Activated CD4-positive, alpha-beta memory T cell treated with anti-CD3 and anti-CD28 coated beads, Interleukin-2, amount 10 ng/mL, durations not matched to agents 7 days and 5 days (primary cell): ENCODE measurements at regions of chr18 and their contacts with region 1.

Region 1: GRCh38 chr18:76982841-76983587 is 149.6 kb downstream of the MBP start:
- DNase-seq: peak; percentile 90
- H3K4me3 Mint-ChIP-seq: no peak overlapping the region
- H3K27ac Mint-ChIP-seq: no peak overlapping the region
- H3K4me1 Mint-ChIP-seq: peaks cover 6% of the 10 kb centered on the region
- H3K27me3 Mint-ChIP-seq: no peaks in the 10 kb centered on the region

Region 2: GRCh38 chr18:76922107-76922506 is 60.9 kb before region 1 on chr18:
- CTCF ChIA-PET with region 1: interaction called, 33 read pairs
- POLR2A ChIA-PET with region 1: interaction called, 3 read pairs
- DNase-seq: peak; percentile 62
- H3K4me3 Mint-ChIP-seq: no peak overlapping the region
- H3K27ac Mint-ChIP-seq: no peak overlapping the region
- H3K4me1 Mint-ChIP-seq: peaks cover 15% of the 10 kb centered on the region
- H3K27me3 Mint-ChIP-seq: no peaks in the 10 kb centered on the region

Region 3: DNA sequence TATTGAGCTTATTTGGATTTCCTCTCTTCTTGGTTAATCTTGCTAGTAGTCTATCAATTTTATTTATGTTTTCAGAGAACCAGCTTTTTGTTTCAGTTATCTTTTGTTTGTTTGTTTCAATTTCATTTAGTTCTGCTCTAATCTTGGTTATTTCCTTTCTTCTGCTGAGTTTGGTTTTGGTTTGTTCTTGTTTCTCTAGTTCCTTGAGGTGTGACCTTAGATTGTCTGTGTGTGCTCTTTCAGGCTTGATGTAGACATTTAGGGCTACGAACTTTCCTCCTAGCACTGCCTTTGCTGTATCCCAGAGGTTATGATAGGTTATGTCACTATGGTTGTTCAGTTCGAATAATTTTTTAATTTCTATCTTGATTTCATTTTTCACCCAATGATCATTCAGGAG is 19.1 kb before region 1 on chr18:
- CTCF ChIA-PET with region 1: interaction called, 19 read pairs
- POLR2A ChIA-PET with region 1: no interaction called
- DNase-seq: no peak
- H3K4me3 Mint-ChIP-seq: peak overlapping the region; percentile 4
- H3K27ac Mint-ChIP-seq: peak overlapping the region; percentile 70
- H3K4me1 Mint-ChIP-seq: peaks cover 30% of the 10 kb centered on the region
- H3K27me3 Mint-ChIP-seq: no peaks in the 10 kb centered on the region

Region 4: DNA sequence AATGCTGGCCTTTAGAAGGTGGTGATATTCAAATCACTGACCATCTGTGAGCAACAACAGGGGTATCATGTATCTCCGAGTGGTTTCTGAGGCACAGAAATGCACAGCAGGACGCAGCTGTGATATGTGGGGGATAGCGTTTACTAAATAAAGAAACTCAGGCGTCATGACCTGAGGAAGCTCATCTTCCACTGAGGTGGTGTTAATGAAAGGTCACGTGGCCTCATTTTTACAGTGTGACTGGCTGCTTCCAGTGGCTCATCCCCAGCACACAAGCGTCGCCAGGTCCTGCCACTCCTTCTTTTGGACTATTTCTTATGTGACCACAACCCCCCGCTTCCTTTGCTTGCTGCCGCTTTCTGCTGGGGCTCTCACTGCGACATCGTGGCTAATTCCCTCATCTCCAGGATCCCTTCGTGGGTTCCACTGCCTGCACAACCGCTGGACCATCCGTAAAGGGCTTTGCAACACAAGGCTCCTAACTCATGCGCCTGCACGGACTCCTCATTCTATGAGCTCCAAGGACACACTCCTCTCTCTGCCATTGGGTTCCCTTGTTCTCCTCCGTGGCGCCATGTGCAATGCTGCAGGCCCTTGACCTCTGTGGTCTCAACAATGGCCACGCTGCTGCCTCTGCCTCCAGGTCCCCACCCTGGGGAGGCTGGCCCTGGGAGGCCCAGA is 40.2 kb after region 1 on chr18:
- CTCF ChIA-PET with region 1: no interaction called
- POLR2A ChIA-PET with region 1: no interaction called
- DNase-seq: no peak
- H3K4me3 Mint-ChIP-seq: no peak overlapping the region
- H3K27ac Mint-ChIP-seq: no peak overlapping the region
- H3K4me1 Mint-ChIP-seq: no peaks in the 10 kb centered on the region
- H3K27me3 Mint-ChIP-seq: no peaks in the 10 kb centered on the region

Region 5: DNA sequence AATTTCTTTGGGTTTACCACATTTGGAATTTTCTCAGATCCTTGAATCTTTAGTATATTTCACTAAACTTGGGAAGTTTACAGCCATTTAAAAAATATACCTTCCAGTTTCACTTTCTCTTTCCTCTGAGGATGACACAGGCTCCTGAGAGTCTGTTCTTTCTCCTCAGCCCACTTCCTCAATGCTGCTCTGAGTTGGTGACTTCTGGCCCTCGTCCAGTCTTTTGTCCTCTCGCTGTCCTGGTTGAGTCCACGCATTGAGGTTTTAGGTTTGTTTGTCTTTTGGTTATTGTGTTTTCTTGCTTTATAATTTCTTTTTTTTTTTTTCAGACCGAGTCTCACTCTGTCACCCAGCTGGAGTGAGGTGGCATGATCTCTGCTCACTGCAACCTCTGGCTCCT is 225.9 kb after region 1 on chr18:
- CTCF ChIA-PET with region 1: interaction called, 12 read pairs
- POLR2A ChIA-PET with region 1: no interaction called
- DNase-seq: peak; percentile 33
- H3K4me3 Mint-ChIP-seq: peak overlapping the region; percentile 83
- H3K27ac Mint-ChIP-seq: peak overlapping the region; percentile 84
- H3K4me1 Mint-ChIP-seq: peaks cover 50% of the 10 kb centered on the region
- H3K27me3 Mint-ChIP-seq: no peaks in the 10 kb centered on the region